Tibial artery (tissue), 4 donors: ENCODE measurements at regions of chr6 and their contacts with region 1.

Region 1: DNA sequence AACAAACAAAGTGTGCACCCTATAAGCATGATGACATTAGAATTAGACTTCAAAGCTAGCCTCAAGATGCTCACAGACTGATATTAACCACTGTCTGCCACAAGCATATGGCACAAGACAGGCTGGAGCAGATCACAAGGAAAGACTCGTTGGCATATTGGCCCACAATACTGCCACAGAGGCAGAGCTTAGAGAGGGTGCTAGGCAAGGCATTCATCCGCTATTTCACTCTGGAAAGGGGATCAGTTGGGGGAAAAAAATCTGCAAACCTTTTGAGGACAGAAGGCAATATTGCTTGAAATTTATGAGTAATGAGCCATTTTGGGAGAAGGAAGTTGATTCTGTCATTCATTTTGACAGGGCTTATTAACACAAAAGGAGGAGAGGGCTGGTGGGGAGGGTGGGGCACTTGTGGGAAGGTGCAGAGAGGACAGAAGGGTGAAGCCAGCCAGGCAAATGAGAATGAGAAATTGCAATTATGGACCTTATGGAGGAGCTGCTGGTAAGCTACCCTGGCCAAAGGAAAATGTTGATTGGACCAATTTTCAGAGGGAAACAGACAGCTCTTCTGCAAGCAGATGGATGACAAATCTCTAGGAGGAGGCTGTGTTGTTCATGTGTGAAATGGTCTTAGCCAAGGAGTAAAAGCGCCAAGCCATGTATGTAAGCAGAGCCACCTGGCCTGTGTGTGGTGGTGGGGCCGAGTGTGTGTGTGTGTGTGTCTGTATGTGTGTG is 187.7 kb downstream of the GMPR start:
- DNase-seq: no peak
- H3K4me3 ChIP-seq: no peak overlapping the region
- H3K27ac ChIP-seq: no peak overlapping the region
- H3K4me1 ChIP-seq: peaks cover 0 to 30% (median 21%) of the 10 kb centered on the region in 4 donors
- H3K27me3 ChIP-seq: no peaks in the 10 kb centered on the region
- CTCF ChIP-seq: no peak

Region 2: GRCh38 chr6:16374461-16375195 is 51.4 kb before region 1 on chr6:
- intact Hi-C with region 1: no loop called
- DNase-seq: no peak
- H3K4me3 ChIP-seq: no peak overlapping the region
- H3K27ac ChIP-seq: no peak overlapping the region
- H3K4me1 ChIP-seq: peaks cover 0 to 16% (median 3%) of the 10 kb centered on the region in 4 donors
- H3K27me3 ChIP-seq: no peaks in the 10 kb centered on the region
- CTCF ChIP-seq: no peak

Region 3: DNA sequence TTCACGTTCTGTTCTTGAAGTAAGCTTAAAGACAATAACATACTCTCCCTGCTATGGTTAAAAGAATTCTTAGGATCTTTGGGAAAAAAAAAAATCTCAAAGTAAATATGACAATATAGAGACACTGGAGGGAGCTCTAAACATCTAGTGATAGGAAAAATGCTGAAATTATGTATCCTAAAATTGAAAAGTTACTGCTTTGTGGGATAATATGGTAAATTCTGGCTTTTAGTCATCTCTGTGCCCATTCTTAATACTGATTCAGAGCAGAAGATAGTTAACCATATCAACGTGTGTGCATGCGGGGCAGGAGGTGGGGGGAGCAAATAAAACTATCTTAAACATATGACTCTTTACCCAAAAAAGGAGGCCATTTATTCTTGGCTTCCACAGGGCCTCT is 22.2 kb before region 1 on chr6:
- intact Hi-C with region 1: no loop called
- DNase-seq: no peak
- H3K4me3 ChIP-seq: no peak overlapping the region
- H3K27ac ChIP-seq: peak overlapping the region; percentile 53 to 71
- H3K4me1 ChIP-seq: peaks cover 0 to 83% (median 56%) of the 10 kb centered on the region in 4 donors
- H3K27me3 ChIP-seq: no peaks in the 10 kb centered on the region
- CTCF ChIP-seq: no peak

Region 4: DNA sequence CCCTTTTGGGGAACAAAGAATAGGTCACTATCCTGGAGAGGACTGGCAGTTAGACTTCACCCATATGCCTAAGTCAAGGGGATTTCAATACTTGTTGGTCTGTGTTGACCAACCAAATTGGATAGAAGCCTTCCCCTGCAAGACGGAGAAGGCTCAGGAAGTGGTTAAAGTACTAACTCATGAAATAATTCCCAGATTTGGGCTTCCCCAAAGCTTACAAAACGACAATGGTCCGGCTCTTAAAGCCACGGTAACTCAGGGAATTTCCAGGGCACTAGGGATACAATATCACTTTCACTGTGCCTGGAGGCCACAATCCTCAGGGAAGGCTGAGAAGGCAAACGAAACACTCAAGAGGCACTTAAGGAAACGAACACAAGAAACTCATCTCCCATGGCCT is 35.4 kb after region 1 on chr6:
- intact Hi-C with region 1: loop called (anchors 2 kb)
- DNase-seq: no peak
- H3K4me3 ChIP-seq: no peak overlapping the region
- H3K27ac ChIP-seq: no peak overlapping the region
- H3K4me1 ChIP-seq: peaks cover 0 to 6% (median 0%) of the 10 kb centered on the region in 4 donors
- H3K27me3 ChIP-seq: no peaks in the 10 kb centered on the region
- CTCF ChIP-seq: no peak

Region 5: DNA sequence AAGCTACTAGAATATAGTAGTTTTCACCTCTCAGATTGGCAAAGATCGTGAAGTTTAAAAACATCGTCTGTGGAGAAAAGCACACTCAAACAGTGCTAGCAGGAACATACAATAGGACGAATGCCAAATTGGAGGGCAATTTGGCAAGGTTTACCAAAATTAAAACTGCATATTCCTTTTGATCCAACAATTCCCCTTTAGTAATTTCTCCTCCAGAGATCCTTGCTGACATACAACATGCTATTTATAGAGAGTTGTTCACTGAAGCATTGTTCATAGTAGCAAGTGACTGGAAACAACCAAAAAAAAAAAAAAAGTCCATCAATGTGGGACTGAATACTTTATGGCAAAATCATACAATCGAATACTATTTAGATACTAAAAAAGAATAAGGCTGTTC is 133.0 kb after region 1 on chr6:
- intact Hi-C with region 1: no loop called
- DNase-seq: no peak
- H3K4me3 ChIP-seq: peak overlapping the region in 1 of 2 donors; percentile 16
- H3K27ac ChIP-seq: peak overlapping the region; percentile 45 to 50
- H3K4me1 ChIP-seq: peaks cover 0 to 33% (median 16%) of the 10 kb centered on the region in 4 donors
- H3K27me3 ChIP-seq: no peaks in the 10 kb centered on the region
- CTCF ChIP-seq: no peak